Lower lobe of right lung (tissue), 2 donors: ENCODE measurements at regions of chr5 and their contacts with region 1.

Region 1: DNA sequence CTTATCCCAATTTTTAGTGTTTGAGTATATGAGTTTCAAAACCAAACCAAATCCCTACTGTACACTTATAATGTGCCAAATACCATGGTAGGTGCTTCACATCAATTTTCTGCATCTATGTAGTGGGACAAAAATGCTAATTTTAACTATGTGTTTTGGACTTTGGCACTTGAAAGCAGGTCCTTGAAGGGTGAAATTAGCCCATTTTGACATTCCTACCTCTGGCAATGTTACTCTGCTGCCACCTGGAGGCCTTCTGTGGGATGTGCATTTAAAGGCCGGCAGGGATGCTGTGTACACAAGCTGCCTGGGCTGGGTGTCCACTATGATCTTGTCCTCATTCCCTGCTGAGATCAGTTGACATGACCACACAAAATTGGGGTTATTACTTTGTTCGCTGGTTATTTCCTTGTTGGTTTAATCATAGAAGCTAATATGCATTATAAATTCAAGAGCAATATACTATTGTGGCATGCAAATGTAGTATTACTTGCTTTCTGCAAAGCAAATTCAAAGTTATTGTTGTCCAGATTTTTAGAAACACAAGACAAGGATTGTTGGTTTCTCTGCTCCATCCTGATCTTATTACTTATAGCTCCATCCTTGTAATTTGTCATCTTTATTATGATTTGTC is 166.8 kb downstream of the ARHGEF28 start:
- DNase-seq: peak; percentile 66
- ATAC-seq: peak; percentile 84 to 93
- H3K4me3 ChIP-seq: no peak overlapping the region
- H3K27ac ChIP-seq: no peak overlapping the region
- H3K4me1 ChIP-seq: peaks cover 20% of the 10 kb centered on the region
- H3K27me3 ChIP-seq: no peaks in the 10 kb centered on the region
- CTCF ChIP-seq: peak; percentile 94

Region 2: GRCh38 chr5:73591102-73591695 is 201.6 kb before region 1 on chr5:
- intact Hi-C with region 1: loop called (anchors 5 kb)
- DNase-seq: no peak
- ATAC-seq: peak; percentile 85 to 90
- H3K4me3 ChIP-seq: no peak overlapping the region
- H3K27ac ChIP-seq: no peak overlapping the region
- H3K4me1 ChIP-seq: no peaks in the 10 kb centered on the region
- H3K27me3 ChIP-seq: no peaks in the 10 kb centered on the region
- CTCF ChIP-seq: peak; percentile 87

Region 3: GRCh38 chr5:73729329-73729728 is 63.5 kb before region 1 on chr5:
- intact Hi-C with region 1: no loop called
- DNase-seq: no peak
- ATAC-seq: no peak
- H3K4me3 ChIP-seq: no peak overlapping the region
- H3K27ac ChIP-seq: no peak overlapping the region
- H3K4me1 ChIP-seq: no peaks in the 10 kb centered on the region
- H3K27me3 ChIP-seq: no peaks in the 10 kb centered on the region
- CTCF ChIP-seq: no peak